Activated naive CD4-positive, alpha-beta T cell treated with anti-CD3 and anti-CD28 coated beads for 36 hours (primary cell): ENCODE measurements at regions of chr7 and their contacts with region 1.

Region 1: DNA sequence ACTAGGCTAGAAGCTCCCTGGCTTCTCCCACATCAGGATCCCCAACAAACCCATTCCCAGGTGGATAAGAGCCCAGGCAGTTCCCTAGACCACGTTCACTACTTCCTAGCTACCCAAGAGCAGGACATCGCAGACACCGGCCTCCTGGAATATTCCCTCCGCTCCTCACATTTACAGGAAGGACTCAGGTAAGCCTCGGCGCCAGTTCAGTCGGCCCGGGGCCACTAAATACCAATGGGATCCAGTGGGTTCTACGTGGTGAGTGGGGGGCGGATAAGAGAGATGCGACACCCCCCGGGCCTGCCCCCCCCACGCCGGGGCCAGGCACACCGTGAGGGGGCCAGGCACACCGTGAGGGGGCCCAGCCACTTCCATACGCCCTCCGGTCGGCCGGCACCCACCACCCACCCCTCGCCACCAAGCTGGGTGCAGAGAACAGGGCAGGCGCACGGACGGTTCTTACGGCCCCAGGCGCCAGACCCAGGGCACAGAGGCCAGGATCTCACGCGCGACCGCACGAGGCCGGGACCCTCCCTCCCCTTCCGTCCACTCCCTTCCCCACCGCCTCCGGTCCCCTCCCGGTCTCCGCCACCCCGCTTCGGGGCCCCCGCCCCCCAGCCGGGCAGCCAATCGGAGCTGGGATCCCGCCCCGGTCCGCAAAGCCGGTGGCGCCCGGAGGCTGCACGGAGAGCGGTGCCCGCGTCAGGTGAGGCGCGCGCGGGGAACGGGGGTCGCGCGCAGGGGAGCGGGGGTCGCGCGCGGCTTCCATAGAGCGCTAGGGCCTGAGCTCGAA is at the start of gene BLVRA:
- DNase-seq: peak; percentile 66
- H3K4me3 Mint-ChIP-seq: peak within 1 kb of the TSS; percentile 71
- H3K27ac Mint-ChIP-seq: no peak within 1 kb of the TSS
- H3K4me1 Mint-ChIP-seq: peaks cover 43% of the 10 kb centered on the region
- H3K27me3 Mint-ChIP-seq: no peaks in the 10 kb centered on the region
- total RNA-seq, gene BLVRA: 26.6 to 28.9 TPM

Region 2: DNA sequence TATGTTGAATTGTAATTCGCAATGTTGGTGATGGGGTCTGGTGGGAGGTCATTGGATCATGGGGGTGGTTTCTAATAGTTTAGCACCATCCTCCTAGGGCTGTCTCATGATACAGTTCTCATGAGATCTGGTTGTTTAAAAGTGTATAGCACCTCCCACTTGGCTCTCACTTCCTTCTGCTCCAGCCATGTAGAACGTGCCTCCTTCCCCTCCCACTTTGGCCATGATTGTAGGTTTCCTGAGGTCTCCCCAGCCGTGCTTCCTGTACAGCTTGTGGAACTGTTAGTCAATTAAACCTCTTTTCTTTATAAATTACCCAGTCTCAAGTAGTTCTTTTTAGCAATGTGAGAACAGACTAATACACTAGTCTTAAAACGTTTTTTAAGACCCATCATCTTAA is 661.4 kb before region 1 on chr7:
- CTCF ChIA-PET with region 1: no interaction called
- intact Hi-C with region 1: no loop called
- DNase-seq: no peak
- H3K4me3 Mint-ChIP-seq: no peak overlapping the region
- H3K27ac Mint-ChIP-seq: no peak overlapping the region
- H3K4me1 Mint-ChIP-seq: no peaks in the 10 kb centered on the region
- H3K27me3 Mint-ChIP-seq: peaks cover 3% of the 10 kb centered on the region

Region 3: DNA sequence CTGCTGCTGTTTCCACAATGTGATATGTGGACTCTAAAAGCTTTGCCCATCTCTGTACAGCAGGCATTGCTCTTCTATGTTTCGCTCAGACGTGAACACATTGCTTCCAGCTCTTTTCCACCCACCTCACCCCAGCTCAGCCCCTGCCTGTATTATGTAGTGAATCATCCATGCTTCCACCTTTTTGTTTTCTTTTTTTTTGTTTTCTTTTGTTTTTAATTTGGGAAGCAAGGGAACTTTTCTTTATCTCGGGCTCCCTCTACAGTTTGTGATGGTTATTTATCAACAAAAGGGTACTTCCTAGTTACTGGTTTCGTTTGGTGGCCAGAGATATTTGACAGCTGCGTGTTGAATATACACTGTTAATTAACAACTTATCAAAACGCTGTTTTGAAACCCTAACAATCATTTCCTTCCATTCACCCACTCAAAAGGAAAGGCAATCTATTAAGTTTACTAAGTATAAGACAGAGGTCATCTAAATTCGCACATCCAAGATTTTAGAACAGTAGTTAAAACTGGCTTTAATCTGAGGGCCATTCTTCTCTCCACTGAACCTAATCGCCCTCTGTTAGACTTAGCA is 303.2 kb before region 1 on chr7:
- CTCF ChIA-PET with region 1: no interaction called
- intact Hi-C with region 1: no loop called
- DNase-seq: no peak
- H3K4me3 Mint-ChIP-seq: no peak overlapping the region
- H3K27ac Mint-ChIP-seq: no peak overlapping the region
- H3K4me1 Mint-ChIP-seq: no peaks in the 10 kb centered on the region
- H3K27me3 Mint-ChIP-seq: no peaks in the 10 kb centered on the region

Region 4: DNA sequence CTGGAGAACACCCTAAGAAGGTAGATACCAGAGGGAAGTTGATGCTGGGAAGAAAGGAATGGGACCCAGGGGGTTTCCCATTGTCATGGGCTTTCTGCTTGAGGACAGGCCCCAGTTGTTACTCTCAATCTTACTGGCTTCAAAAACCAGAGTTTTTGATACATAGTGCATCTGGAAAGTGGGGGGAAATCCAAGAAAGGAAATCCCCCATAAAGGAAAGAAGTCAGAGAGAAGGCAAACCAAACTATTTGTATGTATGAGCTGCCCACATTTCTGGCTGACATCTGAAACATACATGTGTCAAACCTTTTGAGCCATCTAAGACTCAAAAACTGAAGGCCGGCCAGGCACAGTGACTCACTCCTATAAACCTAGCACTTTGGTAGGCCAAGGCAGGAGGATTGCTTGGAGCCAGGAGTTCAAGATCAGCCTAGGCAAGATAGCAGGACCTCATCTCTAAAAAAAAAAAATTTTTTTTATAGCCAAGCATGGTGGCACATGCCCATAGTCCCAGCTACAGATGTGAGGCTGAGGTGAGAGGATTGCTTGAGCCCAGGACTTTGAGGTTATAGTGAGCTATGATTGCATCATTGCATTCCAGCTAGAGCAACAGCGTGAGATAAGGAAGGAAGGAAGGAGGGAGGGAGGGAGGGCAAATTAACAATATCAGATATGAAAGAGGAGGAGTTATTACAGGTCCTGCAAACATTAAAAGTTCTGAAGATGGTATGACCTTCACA is 22.3 kb before region 1 on chr7:
- CTCF ChIA-PET with region 1: no interaction called
- intact Hi-C with region 1: loop called (anchors 1 kb)
- DNase-seq: peak; percentile 86
- H3K4me3 Mint-ChIP-seq: no peak overlapping the region
- H3K27ac Mint-ChIP-seq: peak overlapping the region; percentile 75
- H3K4me1 Mint-ChIP-seq: peaks cover 22% of the 10 kb centered on the region
- H3K27me3 Mint-ChIP-seq: peaks cover 7% of the 10 kb centered on the region